ENCODE measurements at regions of chr10 and their contacts with region 1.

Region 1: GRCh38 chr10:16843252-16843870 is 26.1 kb upstream of the RSU1 start:
- DNase-seq: no peak
- ATAC-seq: peak; percentile 78
- H3K4me3 Mint-ChIP-seq: no peak overlapping the region
- H3K27ac Mint-ChIP-seq: no peak overlapping the region
- H3K4me1 Mint-ChIP-seq: peaks cover 6% of the 10 kb centered on the region
- H3K27me3 Mint-ChIP-seq: no peaks in the 10 kb centered on the region

Region 2: DNA sequence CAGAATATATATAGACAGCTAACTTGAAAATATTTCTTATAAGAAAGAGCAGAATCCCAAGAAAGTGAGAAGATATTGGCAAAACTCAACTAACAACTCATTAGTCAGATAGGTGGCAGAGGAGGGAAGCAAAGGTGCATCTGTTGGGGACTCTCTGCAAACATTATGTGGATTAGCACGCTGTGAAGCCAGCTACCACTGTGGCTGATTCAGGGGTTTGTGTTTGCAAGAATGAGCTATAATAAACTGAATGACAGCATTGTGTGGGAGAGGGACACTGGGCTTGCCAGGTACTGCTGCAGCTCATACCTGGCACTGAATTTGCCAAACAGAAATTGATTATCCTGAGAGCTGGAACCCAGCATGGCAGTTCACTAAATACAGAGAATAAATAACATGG is 812.8 kb before region 1 on chr10:
- CTCF ChIA-PET with region 1: no interaction called
- POLR2A ChIA-PET with region 1: no interaction called
- intact Hi-C with region 1: no loop called
- DNase-seq: no peak
- ATAC-seq: no peak
- H3K4me3 Mint-ChIP-seq: no peak overlapping the region
- H3K27ac Mint-ChIP-seq: no peak overlapping the region
- H3K4me1 Mint-ChIP-seq: no peaks in the 10 kb centered on the region
- H3K27me3 Mint-ChIP-seq: no peaks in the 10 kb centered on the region

Region 3: GRCh38 chr10:16689227-16689626 is 154.1 kb before region 1 on chr10:
- CTCF ChIA-PET with region 1: no interaction called
- POLR2A ChIA-PET with region 1: no interaction called
- intact Hi-C with region 1: no loop called
- DNase-seq: no peak
- ATAC-seq: no peak
- H3K4me3 Mint-ChIP-seq: no peak overlapping the region
- H3K27ac Mint-ChIP-seq: no peak overlapping the region
- H3K4me1 Mint-ChIP-seq: no peaks in the 10 kb centered on the region
- H3K27me3 Mint-ChIP-seq: no peaks in the 10 kb centered on the region

Region 4: GRCh38 chr10:16828114-16828568 is 15.2 kb before region 1 on chr10:
- CTCF ChIA-PET with region 1: interaction called, 3 read pairs
- POLR2A ChIA-PET with region 1: no interaction called
- intact Hi-C with region 1: loop called (anchors 1 kb)
- DNase-seq: peak; percentile 77
- ATAC-seq: peak; percentile 95
- H3K4me3 Mint-ChIP-seq: no peak overlapping the region
- H3K27ac Mint-ChIP-seq: no peak overlapping the region
- H3K4me1 Mint-ChIP-seq: peaks cover 2% of the 10 kb centered on the region
- H3K27me3 Mint-ChIP-seq: no peaks in the 10 kb centered on the region

Region 5: GRCh38 chr10:16891375-16892313 is 48.3 kb after region 1 on chr10:
- CTCF ChIA-PET with region 1: interaction called, 3 read pairs
- POLR2A ChIA-PET with region 1: no interaction called
- intact Hi-C with region 1: loop called in 1 of 2 experiments (anchors 2 kb)
- DNase-seq: peak; percentile 72
- ATAC-seq: peak; percentile 96
- H3K4me3 Mint-ChIP-seq: peak overlapping the region; percentile 56
- H3K27ac Mint-ChIP-seq: peak overlapping the region; percentile 48
- H3K4me1 Mint-ChIP-seq: peaks cover 13% of the 10 kb centered on the region
- H3K27me3 Mint-ChIP-seq: no peaks in the 10 kb centered on the region

Region 6: GRCh38 chr10:17138460-17139042 is 295.2 kb after region 1 on chr10:
- CTCF ChIA-PET with region 1: no interaction called
- POLR2A ChIA-PET with region 1: no interaction called
- intact Hi-C with region 1: no loop called
- DNase-seq: no peak
- ATAC-seq: no peak
- H3K4me3 Mint-ChIP-seq: no peak overlapping the region
- H3K27ac Mint-ChIP-seq: no peak overlapping the region
- H3K4me1 Mint-ChIP-seq: peaks cover 9% of the 10 kb centered on the region
- H3K27me3 Mint-ChIP-seq: no peaks in the 10 kb centered on the region

Region 7: DNA sequence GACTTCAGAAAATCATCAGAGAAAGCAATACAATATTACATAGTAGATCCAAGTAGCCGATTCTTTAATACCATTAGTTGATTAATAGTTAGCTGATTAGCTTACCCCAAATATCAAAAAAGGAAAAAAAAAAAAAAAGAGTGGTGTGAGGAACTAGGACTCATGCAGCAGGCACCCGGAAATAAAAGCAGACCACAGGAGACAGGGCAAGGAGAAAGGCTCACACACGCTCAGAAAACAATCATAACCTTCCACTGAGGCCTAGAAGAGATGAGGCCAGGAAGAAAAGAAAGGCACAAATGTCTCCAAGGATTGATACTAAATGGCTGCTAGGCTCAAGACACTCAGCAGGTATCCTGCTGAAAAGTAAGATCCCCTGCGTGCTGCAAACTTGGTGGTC is 332.2 kb after region 1 on chr10:
- CTCF ChIA-PET with region 1: no interaction called
- POLR2A ChIA-PET with region 1: no interaction called
- intact Hi-C with region 1: loop called in 1 of 2 experiments (anchors 5 kb)
- DNase-seq: peak; percentile 19
- ATAC-seq: peak; percentile 64
- H3K4me3 Mint-ChIP-seq: peak overlapping the region; percentile 56
- H3K27ac Mint-ChIP-seq: peak overlapping the region; percentile 43
- H3K4me1 Mint-ChIP-seq: peaks cover 20% of the 10 kb centered on the region
- H3K27me3 Mint-ChIP-seq: no peaks in the 10 kb centered on the region

Region 8: DNA sequence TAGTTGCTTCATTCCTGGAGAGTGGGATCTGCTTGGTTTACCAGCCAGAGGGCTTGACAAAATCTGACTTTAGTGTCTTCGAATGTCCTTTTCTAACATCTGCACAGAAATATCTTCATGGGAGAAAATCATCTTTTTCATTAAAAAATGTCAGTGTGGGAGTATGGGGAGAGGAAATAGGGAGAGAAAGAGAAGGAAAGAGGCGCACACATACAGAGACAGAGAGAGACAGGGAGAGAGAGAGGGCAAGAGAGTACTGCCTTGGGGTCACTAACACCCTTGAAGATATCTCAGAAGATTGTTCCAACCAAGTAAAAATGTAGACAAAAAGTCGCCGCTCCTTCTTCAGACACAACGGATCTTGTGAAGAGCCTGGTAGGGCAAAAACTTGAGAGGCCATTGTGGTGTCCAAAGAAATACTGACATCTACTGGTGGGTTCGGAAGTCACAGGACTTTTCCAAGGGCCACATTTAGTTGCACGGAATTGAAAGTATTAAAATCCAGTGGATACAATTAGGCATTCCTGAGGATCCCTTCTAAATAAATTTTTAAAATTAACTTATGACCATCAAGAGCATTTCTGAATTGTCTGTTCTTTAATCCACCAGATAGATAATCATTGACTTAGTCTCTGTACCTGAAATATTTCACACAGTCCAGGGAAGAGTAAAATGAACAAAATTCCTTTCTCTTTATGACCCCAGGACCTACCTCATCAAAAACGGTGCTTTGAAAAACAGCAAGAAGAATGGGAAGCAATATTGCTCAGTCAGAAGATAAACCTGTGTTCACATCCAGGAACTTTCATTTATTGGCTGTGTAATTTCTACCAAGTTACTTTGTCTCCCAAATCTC is 414.3 kb after region 1 on chr10:
- CTCF ChIA-PET with region 1: interaction called, 16 read pairs
- POLR2A ChIA-PET with region 1: no interaction called
- intact Hi-C with region 1: loop called (anchors 1 kb)
- DNase-seq: peak; percentile 66
- ATAC-seq: peak; percentile 86
- H3K4me3 Mint-ChIP-seq: peak overlapping the region; percentile 9
- H3K27ac Mint-ChIP-seq: peak overlapping the region; percentile 0
- H3K4me1 Mint-ChIP-seq: peaks cover 7% of the 10 kb centered on the region
- H3K27me3 Mint-ChIP-seq: peaks cover 3% of the 10 kb centered on the region

Region 9: GRCh38 chr10:17423632-17424186 is 580.3 kb after region 1 on chr10:
- CTCF ChIA-PET with region 1: no interaction called
- POLR2A ChIA-PET with region 1: no interaction called
- intact Hi-C with region 1: no loop called
- DNase-seq: no peak
- ATAC-seq: peak; percentile 59
- H3K4me3 Mint-ChIP-seq: no peak overlapping the region
- H3K27ac Mint-ChIP-seq: no peak overlapping the region
- H3K4me1 Mint-ChIP-seq: peaks cover 59% of the 10 kb centered on the region
- H3K27me3 Mint-ChIP-seq: no peaks in the 10 kb centered on the region